Psoas muscle (tissue), 8 donors: ENCODE measurements at regions of chr13 and their contacts with region 1.

Region 1: GRCh38 chr13:19766213-19766990 is 16.3 kb downstream of the PSPC1 start:
- DNase-seq: no peak
- ATAC-seq: no peak
- H3K4me3 ChIP-seq: no peak overlapping the region
- H3K27ac ChIP-seq: no peak overlapping the region
- H3K4me1 ChIP-seq: peaks cover 7% of the 10 kb centered on the region
- H3K27me3 ChIP-seq: no peaks in the 10 kb centered on the region
- CTCF ChIP-seq: no peak

Region 2: DNA sequence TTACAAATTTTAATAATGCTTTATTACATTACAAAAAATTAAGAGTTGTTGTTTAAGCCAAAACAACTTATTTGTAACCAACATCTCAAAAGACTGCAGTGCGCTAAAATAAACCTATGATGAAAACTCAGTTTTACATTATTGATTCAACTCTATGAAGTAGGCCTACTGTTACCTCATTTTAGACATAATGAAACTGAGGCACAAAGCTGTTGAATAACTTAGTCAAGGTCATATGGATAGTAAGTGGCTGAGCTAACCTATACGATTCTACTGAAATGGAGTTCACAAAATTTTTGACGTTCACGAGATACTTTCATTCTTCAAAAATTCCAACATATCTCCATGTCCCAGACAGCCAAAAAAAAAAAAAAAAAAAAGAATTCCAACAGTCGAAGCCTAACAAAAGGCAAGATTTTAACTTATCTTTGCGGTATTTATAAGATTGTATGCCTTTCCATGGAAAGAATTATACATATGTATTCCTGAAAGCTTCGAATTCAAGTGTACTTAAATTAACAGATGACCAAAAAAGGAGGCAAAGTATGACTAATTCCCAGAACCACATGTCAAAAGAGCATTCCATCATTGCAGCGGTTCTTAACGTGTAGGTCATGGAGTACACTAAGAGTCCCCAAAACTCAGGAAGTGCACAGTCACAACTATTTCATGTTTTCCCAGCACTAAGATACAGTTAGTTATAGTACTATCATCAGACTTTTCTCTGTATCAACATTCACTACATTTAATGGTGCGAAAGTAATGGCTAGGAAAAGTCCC is 53.0 kb before region 1 on chr13:
- intact Hi-C with region 1: loop called in 1 of 2 experiments (anchors 10 kb)
- DNase-seq: no peak
- ATAC-seq: peak in 1 of 4 donors; percentile 29
- H3K4me3 ChIP-seq: no peak overlapping the region
- H3K27ac ChIP-seq: no peak overlapping the region
- H3K4me1 ChIP-seq: no peaks in the 10 kb centered on the region
- H3K27me3 ChIP-seq: no peaks in the 10 kb centered on the region
- CTCF ChIP-seq: no peak

Region 3: GRCh38 chr13:20118268-20119140 is 352.1 kb after region 1 on chr13:
- intact Hi-C with region 1: no loop called
- DNase-seq: peak; percentile 56 to 64
- ATAC-seq: peak; percentile 65 to 84 (median 76)
- H3K4me3 ChIP-seq: peak overlapping the region; percentile 72
- H3K27ac ChIP-seq: peak overlapping the region; percentile 63
- H3K4me1 ChIP-seq: peaks cover 4% of the 10 kb centered on the region
- H3K27me3 ChIP-seq: no peaks in the 10 kb centered on the region
- CTCF ChIP-seq: no peak

Region 4: GRCh38 chr13:20911037-20911436 is 1144.6 kb after region 1 on chr13:
- intact Hi-C with region 1: no loop called
- DNase-seq: no peak
- ATAC-seq: no peak
- H3K4me3 ChIP-seq: no peak overlapping the region
- H3K27ac ChIP-seq: no peak overlapping the region
- H3K4me1 ChIP-seq: no peaks in the 10 kb centered on the region
- H3K27me3 ChIP-seq: no peaks in the 10 kb centered on the region
- CTCF ChIP-seq: no peak